Naive thymus-derived CD4-positive, alpha-beta T cell (primary cell): ENCODE measurements at regions of chr19 and their contacts with region 1.

Region 1: GRCh38 chr19:6460101-6460853 is 685 bp upstream of the SLC25A23 start:
- DNase-seq: peak; percentile 87 to 97 (median 96)
- ATAC-seq: peak; percentile 90
- H3K4me3 ChIP-seq: peak overlapping the region; percentile 72
- H3K4me3 Mint-ChIP-seq: peak overlapping the region; percentile 92 to 99 (median 98)
- H3K27ac ChIP-seq: peak overlapping the region; percentile 83
- H3K27ac Mint-ChIP-seq: peak overlapping the region; percentile 83 to 96 (median 91)
- H3K4me1 ChIP-seq: peaks cover 0 to 4% of the 10 kb centered on the region in 2 donors
- H3K4me1 Mint-ChIP-seq: peaks cover 11 to 40% (median 34%) of the 10 kb centered on the region in 7 donors
- H3K27me3 ChIP-seq: no peaks in the 10 kb centered on the region
- H3K27me3 Mint-ChIP-seq: peaks cover 0 to 8% (median 0%) of the 10 kb centered on the region in 5 donors

Region 2: DNA sequence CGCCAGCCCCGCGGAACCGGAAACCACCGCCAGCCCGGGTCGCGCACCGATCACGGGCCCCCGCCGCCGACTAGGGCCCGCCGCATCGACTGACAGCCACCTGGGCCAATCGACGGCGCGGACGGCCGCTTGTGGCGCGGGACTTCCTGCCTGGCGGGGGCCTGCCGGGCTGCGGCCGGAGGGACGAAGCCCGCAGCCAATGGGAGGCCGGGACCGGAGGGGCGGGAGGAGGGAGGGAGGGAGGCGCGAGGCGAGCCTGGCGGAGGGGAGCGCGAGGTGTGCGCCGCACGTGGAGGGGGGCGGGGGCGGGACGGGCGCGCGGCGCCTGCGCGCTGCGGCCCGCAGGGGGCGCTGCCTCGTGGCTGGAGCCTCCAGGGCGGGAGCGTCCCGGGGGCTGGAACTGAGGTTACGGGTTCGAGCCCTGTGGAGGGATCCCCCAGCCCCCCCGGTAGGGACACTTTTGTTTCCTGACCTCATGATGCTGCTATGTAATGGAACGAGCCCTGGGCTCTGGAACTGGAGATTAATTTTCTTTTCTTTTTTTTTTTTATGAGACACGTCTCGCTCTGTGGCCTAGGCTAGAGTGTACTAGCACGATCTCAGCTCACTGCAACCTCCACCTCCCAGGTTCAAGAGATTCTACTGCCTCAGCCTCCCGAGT is 180.2 kb before region 1 on chr19 and contains the start of gene MLLT1:
- CTCF ChIA-PET with region 1: no interaction called
- POLR2A ChIA-PET with region 1: no interaction called
- intact Hi-C with region 1: loop called in 1 of 2 experiments (anchors 1 kb)
- DNase-seq: peak; percentile 88 to 98 (median 90)
- ATAC-seq: peak; percentile 96
- H3K4me3 ChIP-seq: peak within 1 kb of the TSS; percentile 54
- H3K4me3 Mint-ChIP-seq: peak within 1 kb of the TSS; percentile 85 to 97 (median 92)
- H3K27ac ChIP-seq: peak within 1 kb of the TSS; percentile 78
- H3K27ac Mint-ChIP-seq: peak within 1 kb of the TSS; percentile 87 to 95 (median 93)
- H3K4me1 ChIP-seq: peaks cover 3 to 20% of the 10 kb centered on the region in 2 donors
- H3K4me1 Mint-ChIP-seq: peaks cover 30 to 42% (median 39%) of the 10 kb centered on the region in 7 donors
- H3K27me3 ChIP-seq: no peaks in the 10 kb centered on the region
- H3K27me3 Mint-ChIP-seq: peaks cover 0 to 6% (median 0%) of the 10 kb centered on the region in 5 donors
- total RNA-seq, gene MLLT1: 33.3 to 47.5 (median 39.0) TPM

Region 3: GRCh38 chr19:6393074-6393983 is 66.9 kb before region 1 on chr19 and contains the start of gene GTF2F1:
- CTCF ChIA-PET with region 1: no interaction called
- POLR2A ChIA-PET with region 1: no interaction called
- intact Hi-C with region 1: loop called in 1 of 2 experiments (anchors 1 kb)
- DNase-seq: peak; percentile 87 to 96 (median 92)
- ATAC-seq: peak; percentile 88
- H3K4me3 ChIP-seq: peak within 1 kb of the TSS; percentile 81
- H3K4me3 Mint-ChIP-seq: peak within 1 kb of the TSS; percentile 90 to 95 (median 94)
- H3K27ac ChIP-seq: peak within 1 kb of the TSS; percentile 98
- H3K27ac Mint-ChIP-seq: peak within 1 kb of the TSS; percentile 95 to 99 (median 97)
- H3K4me1 ChIP-seq: peaks cover 8 to 12% of the 10 kb centered on the region in 2 donors
- H3K4me1 Mint-ChIP-seq: peaks cover 20 to 27% (median 25%) of the 10 kb centered on the region in 7 donors
- H3K27me3 ChIP-seq: no peaks in the 10 kb centered on the region
- H3K27me3 Mint-ChIP-seq: no peaks in the 10 kb centered on the region
- total RNA-seq, gene GTF2F1: 51.5 to 71.6 (median 61.3) TPM

Region 4: DNA sequence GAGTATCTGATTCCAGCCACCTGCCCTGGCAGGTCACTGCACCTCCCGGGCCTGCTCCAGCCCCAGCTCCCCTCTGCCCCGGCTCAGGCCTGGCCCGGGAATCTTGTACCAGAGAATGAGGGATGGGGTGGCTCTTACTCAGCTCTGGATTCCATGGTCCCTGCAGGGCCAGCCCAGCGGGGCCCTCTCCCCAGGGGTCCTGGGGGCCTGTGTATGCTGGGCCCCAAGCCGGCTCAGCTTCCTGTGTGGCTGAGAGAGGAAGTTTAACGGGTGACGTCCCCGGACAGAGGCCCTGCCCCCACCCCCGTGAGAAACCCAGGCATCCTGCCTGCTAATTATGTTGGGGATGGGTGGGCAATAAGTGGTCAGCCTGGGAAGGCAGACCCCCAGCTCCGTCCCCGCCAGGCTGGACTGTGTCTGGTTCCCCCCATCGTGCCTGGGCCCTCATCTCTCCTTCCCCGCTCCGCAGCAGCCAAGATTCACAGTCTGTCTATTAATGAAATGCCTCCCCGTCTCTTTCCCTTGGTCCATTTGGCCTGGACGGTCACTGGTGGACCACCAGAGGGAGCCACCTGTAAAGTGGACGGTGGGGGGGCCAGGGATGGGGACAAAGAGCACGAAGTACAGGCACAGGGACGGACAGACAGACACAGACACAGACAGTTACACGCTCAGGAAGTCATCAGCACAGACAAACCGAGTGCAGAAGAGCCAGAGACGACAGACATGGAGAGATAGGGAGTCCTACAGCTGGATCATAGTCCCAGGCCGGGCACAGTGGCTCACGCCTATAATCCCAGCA is 21.5 kb after region 1 on chr19 and contains the start of gene DENND1C:
- CTCF ChIA-PET with region 1: interaction called, 3 read pairs
- POLR2A ChIA-PET with region 1: interaction called, 24 read pairs
- intact Hi-C with region 1: loop called (anchors 1 kb)
- DNase-seq: peak; percentile 52 to 67 (median 67)
- ATAC-seq: peak; percentile 91
- H3K4me3 ChIP-seq: peak within 1 kb of the TSS; percentile 95
- H3K4me3 Mint-ChIP-seq: peak within 1 kb of the TSS; percentile 88 to 100 (median 96)
- H3K27ac ChIP-seq: peak within 1 kb of the TSS; percentile 94
- H3K27ac Mint-ChIP-seq: peak within 1 kb of the TSS; percentile 93 to 99 (median 96)
- H3K4me1 ChIP-seq: peaks cover 26 to 27% of the 10 kb centered on the region in 2 donors
- H3K4me1 Mint-ChIP-seq: peaks cover 30 to 46% (median 40%) of the 10 kb centered on the region in 7 donors
- H3K27me3 ChIP-seq: no peaks in the 10 kb centered on the region
- H3K27me3 Mint-ChIP-seq: no peaks in the 10 kb centered on the region
- total RNA-seq, gene DENND1C: 106 to 142 (median 118) TPM

Region 5: DNA sequence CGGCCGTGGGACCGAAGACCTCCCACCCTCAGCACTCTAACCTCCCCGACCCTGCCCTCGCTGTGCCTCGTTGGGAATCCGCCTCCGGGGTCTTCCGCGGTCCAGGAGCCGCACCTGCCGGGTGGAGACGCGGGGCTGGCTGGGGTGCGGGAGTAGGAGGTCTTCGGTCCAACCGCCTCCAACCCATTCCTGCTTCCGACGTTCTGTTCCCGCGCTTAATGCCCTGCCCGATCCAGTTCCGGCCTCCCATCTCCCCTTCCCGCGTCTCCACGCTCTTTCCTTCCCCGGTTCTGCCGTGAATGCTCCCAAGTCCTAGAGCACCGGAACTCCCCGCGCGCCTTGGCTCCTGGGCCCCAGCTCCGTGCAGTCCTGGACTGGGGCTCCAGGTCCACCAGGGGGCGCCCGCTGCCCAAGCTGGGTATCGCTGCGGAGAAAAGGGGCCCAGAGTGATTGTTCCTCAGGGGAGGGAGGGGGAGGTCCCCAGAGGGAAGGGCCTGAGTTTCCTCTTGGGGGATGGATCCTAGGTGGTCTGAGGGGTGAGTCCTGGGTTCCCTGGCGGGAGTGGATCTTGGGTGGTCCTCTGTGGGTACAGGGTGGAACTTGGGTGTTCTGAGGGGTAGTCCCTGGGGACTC is 56.5 kb after region 1 on chr19:
- CTCF ChIA-PET with region 1: no interaction called
- POLR2A ChIA-PET with region 1: no interaction called
- intact Hi-C with region 1: loop called (anchors 1 kb)
- DNase-seq: peak; percentile 72 to 96 (median 85)
- ATAC-seq: peak; percentile 91
- H3K4me3 ChIP-seq: peak overlapping the region; percentile 68
- H3K4me3 Mint-ChIP-seq: peak overlapping the region; percentile 81 to 100 (median 96)
- H3K27ac ChIP-seq: peak overlapping the region; percentile 49
- H3K27ac Mint-ChIP-seq: peak overlapping the region; percentile 22 to 90 (median 69)
- H3K4me1 ChIP-seq: peaks cover 8 to 20% of the 10 kb centered on the region in 2 donors
- H3K4me1 Mint-ChIP-seq: peaks cover 22 to 35% (median 33%) of the 10 kb centered on the region in 7 donors
- H3K27me3 ChIP-seq: no peaks in the 10 kb centered on the region
- H3K27me3 Mint-ChIP-seq: peaks cover 0 to 2% (median 0%) of the 10 kb centered on the region in 5 donors